OCI-LY7 (cell line): ENCODE measurements at regions of chr10 and their contacts with region 1.

Region 1: DNA sequence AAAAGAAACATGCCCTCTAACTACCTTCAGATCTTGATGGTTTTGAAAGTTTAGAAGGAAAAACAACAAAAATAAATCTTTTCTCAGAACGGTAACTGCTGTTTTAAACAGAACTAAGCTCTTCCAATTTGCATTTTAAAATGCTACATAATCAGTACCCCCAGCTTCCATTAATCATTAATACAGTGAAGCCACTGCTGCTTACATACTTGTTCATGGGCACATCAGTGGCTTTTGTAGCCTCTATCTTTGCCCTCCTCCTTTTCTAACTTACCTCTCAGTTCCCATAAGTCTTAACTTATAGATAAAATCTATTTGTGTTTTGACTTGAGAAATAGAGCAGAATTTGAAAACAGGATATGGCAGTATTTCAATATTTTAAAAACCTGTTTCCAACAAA is 109.1 kb downstream of the POLL start:
- DNase-seq: no peak
- H3K4me3 ChIP-seq: no peak overlapping the region
- H3K27ac ChIP-seq: no peak overlapping the region
- H3K4me1 ChIP-seq: no peaks in the 10 kb centered on the region
- CTCF ChIP-seq: no peak

Region 2: DNA sequence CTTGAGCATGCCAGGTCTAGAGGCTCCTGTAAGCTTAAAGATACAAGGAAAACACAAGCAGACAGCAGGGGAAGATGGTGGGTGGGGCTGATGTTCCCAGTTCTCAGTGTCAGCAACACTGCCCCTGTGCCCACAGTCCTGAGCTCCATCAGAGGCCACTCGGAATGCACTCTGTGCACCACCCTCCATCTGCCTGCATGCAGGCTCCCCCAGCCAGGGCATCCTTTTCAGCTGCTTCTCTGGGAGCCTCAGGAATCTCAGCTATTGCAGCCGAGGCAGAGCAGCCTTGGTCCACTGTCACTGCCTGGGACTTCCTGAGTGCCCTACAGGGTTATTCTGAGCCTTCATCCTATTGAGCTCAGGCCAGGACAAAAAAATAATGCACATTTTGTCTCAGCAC is 271.9 kb before region 1 on chr10:
- CTCF ChIA-PET with region 1: no interaction called
- POLR2A ChIA-PET with region 1: no interaction called
- intact Hi-C with region 1: no loop called
- DNase-seq: no peak
- H3K4me3 ChIP-seq: no peak overlapping the region
- H3K27ac ChIP-seq: no peak overlapping the region
- H3K4me1 ChIP-seq: no peaks in the 10 kb centered on the region
- CTCF ChIP-seq: no peak

Region 3: DNA sequence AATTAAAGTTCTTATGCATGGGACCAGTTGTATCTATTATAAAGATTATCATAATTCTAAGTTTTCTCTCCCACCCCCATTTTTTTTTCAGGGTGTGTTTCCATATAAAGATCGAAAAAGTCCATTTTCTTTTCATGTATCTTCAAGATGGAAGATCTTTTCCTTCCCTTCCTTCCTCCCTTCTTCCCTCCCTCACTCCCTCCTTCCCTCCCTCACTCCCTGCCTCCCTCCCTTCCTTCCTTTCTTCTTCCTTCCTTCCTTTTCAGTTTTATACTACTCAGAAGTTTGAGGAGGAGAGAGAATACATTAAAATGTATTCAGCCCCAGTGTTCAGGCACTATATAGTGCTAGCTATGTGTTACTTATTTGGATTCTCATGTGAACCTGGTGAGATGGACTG is 11.1 kb after region 1 on chr10:
- CTCF ChIA-PET with region 1: no interaction called
- POLR2A ChIA-PET with region 1: interaction called, 15 read pairs
- intact Hi-C with region 1: no loop called
- DNase-seq: no peak
- H3K4me3 ChIP-seq: no peak overlapping the region
- H3K27ac ChIP-seq: no peak overlapping the region
- H3K4me1 ChIP-seq: no peaks in the 10 kb centered on the region
- CTCF ChIP-seq: no peak

Region 4: DNA sequence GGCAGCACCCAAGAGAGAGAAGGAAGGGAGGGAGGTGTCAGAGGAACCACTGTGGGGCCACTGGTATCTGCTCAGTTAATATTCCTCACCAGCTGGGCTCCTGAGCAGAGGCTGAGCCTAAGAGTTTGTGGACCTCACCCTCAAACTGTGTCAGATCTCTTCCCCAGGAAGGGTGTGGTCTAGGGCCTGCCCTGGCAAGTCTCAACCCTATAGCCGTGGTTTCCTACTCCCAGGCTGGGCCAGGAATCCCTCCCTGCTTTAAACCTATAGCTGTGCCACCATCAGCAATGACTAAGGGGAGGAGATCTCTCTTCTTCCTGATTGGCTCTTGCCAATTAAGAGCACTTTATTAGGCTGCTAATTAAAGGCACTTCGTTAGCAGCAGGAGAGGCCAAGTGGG is 79.2 kb after region 1 on chr10:
- CTCF ChIA-PET with region 1: no interaction called
- POLR2A ChIA-PET with region 1: no interaction called
- intact Hi-C with region 1: no loop called
- DNase-seq: no peak
- H3K4me3 ChIP-seq: no peak overlapping the region
- H3K27ac ChIP-seq: no peak overlapping the region
- H3K4me1 ChIP-seq: no peaks in the 10 kb centered on the region
- CTCF ChIP-seq: no peak